Left cardiac atrium (tissue), 4 donors: ENCODE measurements at regions of chr2 and their contacts with region 1.

Region 1: GRCh38 chr2:11234309-11234708 is 79.0 kb downstream of the SLC66A3 start:
- DNase-seq: no peak
- ATAC-seq: no peak

Region 2: GRCh38 chr2:11411768-11412448 is 177.6 kb after region 1 on chr2:
- intact Hi-C with region 1: loop called (anchors 1 to 5 kb)
- DNase-seq: peak; percentile 54
- ATAC-seq: peak; percentile 66 to 72